AG04450 (cell line): ENCODE measurements at regions of chr10 and their contacts with region 1.

Region 1: GRCh38 chr10:121823993-121824463 is 103.8 kb downstream of the ATE1 start:
- DNase-seq: no peak
- H3K4me3 ChIP-seq: no peak overlapping the region
- H3K27ac ChIP-seq: no peak overlapping the region
- H3K27me3 ChIP-seq: no peaks in the 10 kb centered on the region
- CTCF ChIP-seq: peak; percentile 81

Region 2: GRCh38 chr10:121709675-121710073 is 114.4 kb before region 1 on chr10:
- CTCF ChIA-PET with region 1: no interaction called
- POLR2A ChIA-PET with region 1: no interaction called
- DNase-seq: no peak
- H3K4me3 ChIP-seq: no peak overlapping the region
- H3K27ac ChIP-seq: no peak overlapping the region
- H3K27me3 ChIP-seq: peaks cover 2% of the 10 kb centered on the region
- CTCF ChIP-seq: no peak

Region 3: GRCh38 chr10:121804460-121804859 is 19.6 kb before region 1 on chr10:
- CTCF ChIA-PET with region 1: interaction called, 18 read pairs
- POLR2A ChIA-PET with region 1: no interaction called
- DNase-seq: peak; percentile 29
- H3K4me3 ChIP-seq: no peak overlapping the region
- H3K27ac ChIP-seq: no peak overlapping the region
- H3K27me3 ChIP-seq: no peaks in the 10 kb centered on the region
- CTCF ChIP-seq: no peak

Region 4: DNA sequence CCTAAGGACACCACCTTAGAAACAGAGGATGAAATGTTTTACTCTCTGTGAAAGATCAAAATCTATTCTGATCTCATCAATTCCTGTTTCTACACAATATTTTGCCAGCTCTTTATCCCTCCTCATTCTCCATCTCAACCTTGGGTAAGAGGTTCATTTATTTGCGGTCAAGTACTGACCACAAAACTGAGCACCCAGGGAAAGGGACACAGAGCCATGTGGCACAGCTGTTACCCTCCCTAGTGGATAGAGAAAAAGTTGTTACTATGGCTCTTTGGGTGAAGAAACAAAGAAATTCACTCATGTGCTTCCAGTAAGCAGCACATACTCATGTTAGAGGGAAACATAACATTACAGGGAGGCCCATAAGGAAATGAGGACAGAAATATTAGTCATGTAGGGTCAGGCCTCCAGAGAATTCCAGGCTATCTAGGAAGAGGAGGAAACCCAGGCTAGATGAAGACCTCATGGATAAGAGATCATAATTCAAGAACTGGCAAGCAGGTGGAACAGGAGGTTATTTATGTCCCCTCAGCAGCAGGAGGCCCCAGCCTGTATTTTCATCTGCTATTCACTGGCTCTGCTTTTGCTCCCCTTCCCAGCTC is 10.7 kb before region 1 on chr10:
- CTCF ChIA-PET with region 1: interaction called, 27 read pairs
- POLR2A ChIA-PET with region 1: no interaction called
- DNase-seq: no peak
- H3K4me3 ChIP-seq: no peak overlapping the region
- H3K27ac ChIP-seq: no peak overlapping the region
- H3K27me3 ChIP-seq: no peaks in the 10 kb centered on the region
- CTCF ChIP-seq: no peak

Region 5: DNA sequence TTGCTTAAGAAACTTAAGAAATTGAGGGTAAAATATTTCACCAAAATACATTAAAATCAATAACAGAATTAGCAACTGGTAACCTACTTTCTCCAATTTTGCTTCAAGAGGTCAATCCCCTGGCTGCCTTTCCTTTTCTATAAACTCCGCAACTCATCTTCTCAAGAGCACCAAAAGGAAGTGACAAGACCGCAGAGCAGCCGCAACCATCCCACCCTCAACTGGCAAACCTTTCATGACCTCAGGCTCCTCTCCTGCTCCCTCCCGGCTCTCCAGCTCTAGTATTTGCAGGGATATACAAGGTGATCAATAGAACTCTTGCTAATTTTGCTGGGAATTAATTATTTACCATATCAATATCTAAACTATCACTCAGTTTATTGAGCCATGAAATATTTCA is 14.9 kb after region 1 on chr10:
- CTCF ChIA-PET with region 1: interaction called, 68 read pairs
- POLR2A ChIA-PET with region 1: no interaction called
- DNase-seq: no peak
- H3K4me3 ChIP-seq: no peak overlapping the region
- H3K27ac ChIP-seq: no peak overlapping the region
- H3K27me3 ChIP-seq: no peaks in the 10 kb centered on the region
- CTCF ChIP-seq: no peak

Region 6: GRCh38 chr10:121880895-121881294 is 56.9 kb after region 1 on chr10:
- CTCF ChIA-PET with region 1: interaction called, 17 read pairs
- POLR2A ChIA-PET with region 1: no interaction called
- DNase-seq: no peak
- H3K4me3 ChIP-seq: no peak overlapping the region
- H3K27ac ChIP-seq: no peak overlapping the region
- H3K27me3 ChIP-seq: no peaks in the 10 kb centered on the region
- CTCF ChIP-seq: no peak

Region 7: DNA sequence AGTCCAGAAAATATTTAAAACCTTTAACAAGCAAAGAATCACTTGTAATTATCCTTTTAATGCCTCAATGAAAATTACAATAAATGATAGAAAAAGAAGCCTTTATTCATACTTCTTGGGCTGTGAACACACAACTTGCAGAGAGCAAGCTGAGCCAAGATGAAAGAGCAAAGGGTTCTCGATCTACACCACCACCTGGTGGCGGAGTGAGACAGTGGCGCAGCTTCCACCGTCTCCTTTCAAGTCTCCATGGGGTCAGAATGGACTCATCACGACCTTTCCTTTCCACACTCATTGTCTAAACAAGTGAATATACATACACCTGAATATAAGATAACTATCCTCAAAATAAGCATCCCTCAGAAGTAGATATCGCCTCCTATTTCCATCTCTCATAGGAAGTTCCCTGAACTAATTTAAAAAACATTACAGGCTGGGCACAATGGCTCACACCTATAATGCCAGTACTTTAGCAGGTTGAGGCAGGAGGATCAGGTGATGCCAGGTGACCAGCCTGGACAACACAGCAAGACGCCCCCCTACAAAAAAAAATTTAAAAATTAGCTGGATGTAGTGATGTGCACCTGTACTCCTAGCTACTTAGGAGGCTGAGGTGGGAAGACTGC is 63.1 kb after region 1 on chr10:
- CTCF ChIA-PET with region 1: interaction called, 13 read pairs
- POLR2A ChIA-PET with region 1: no interaction called
- DNase-seq: peak; percentile 43
- H3K4me3 ChIP-seq: no peak overlapping the region
- H3K27ac ChIP-seq: no peak overlapping the region
- H3K27me3 ChIP-seq: no peaks in the 10 kb centered on the region
- CTCF ChIP-seq: peak; percentile 95

Region 8: GRCh38 chr10:121900443-121901174 is 76.6 kb after region 1 on chr10:
- CTCF ChIA-PET with region 1: interaction called, 19 read pairs
- POLR2A ChIA-PET with region 1: no interaction called
- DNase-seq: peak; percentile 42
- H3K4me3 ChIP-seq: no peak overlapping the region
- H3K27ac ChIP-seq: no peak overlapping the region
- H3K27me3 ChIP-seq: no peaks in the 10 kb centered on the region
- CTCF ChIP-seq: peak; percentile 66

Region 9: GRCh38 chr10:122128357-122128756 is 304.3 kb after region 1 on chr10:
- CTCF ChIA-PET with region 1: no interaction called
- POLR2A ChIA-PET with region 1: no interaction called
- DNase-seq: no peak
- H3K4me3 ChIP-seq: peak overlapping the region; percentile 55; the same call in 1 of the 2 replicates
- H3K27ac ChIP-seq: no peak overlapping the region
- H3K27me3 ChIP-seq: no peaks in the 10 kb centered on the region
- CTCF ChIP-seq: peak; percentile 20; the same call in 1 of the 2 replicates